ENCODE measurements at regions of chr20 and their contacts with region 1.

Region 1: GRCh38 chr20:62793912-62794724 is 2.2 kb upstream of the MRGBP start:
- DNase-seq: peak; percentile 93 to 97
- ATAC-seq: peak; percentile 65 to 83
- H3K4me3 ChIP-seq: peak overlapping the region; percentile 64
- H3K27ac ChIP-seq: peak overlapping the region; percentile 92 to 100
- H3K4me1 ChIP-seq: peaks cover 29% of the 10 kb centered on the region
- CTCF ChIP-seq: no peak
- EP300 ChIP-seq: no peak
- POLR2A ChIP-seq: peak; percentile 67
- RAD21 ChIP-seq: no peak

Region 2: DNA sequence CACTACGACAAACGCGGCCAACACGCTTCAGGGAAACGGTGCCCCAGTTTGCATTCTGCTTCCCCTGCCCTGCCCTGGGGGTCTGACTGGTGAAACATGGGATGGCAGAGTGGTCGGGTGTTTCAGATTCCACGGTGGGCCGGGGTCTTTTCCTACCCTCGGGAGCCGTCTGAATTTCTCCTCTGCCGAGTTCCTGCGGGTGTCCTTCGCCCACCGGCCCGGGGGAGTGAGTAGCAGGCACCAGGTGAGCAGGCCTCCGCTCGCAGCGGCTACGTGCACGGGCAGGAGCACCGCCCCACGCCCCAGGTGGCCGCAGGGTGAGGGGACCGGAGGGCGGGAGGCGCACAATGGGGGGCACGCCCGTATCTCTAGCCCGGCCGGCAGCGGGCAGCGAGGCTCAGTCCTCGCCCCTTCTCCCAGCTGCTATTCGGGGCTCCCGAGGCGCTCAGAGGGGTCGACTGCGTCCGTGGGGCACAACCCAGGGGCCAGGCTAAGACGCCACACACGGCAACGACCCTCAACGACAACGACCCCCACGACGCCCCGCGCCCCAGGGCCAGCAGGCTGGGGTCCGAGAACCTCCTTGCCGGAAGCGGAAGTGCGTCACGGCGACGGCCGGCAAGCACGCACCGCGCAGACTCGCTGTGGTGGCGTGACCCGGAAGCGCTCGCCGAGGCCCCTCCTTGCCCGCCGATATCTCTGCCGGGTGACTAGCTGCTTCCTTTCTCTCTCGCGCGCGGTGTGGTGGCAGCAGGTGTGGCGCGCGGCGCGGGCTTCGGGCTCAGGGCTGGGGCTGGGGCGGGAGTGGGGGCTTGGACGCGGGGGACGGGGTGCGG is 407.5 kb before region 1 on chr20 and contains the start of gene RPS21:
- CTCF ChIA-PET with region 1: no interaction called
- POLR2A ChIA-PET with region 1: no interaction called
- DNase-seq: peak in 1 of 2 experiments; percentile 93
- ATAC-seq: peak; percentile 78 to 87
- H3K4me3 ChIP-seq: peak within 1 kb of the TSS; percentile 94
- H3K27ac ChIP-seq: peak within 1 kb of the TSS; percentile 88 to 97
- H3K4me1 ChIP-seq: peaks cover 33% of the 10 kb centered on the region
- CTCF ChIP-seq: no peak
- EP300 ChIP-seq: no peak
- POLR2A ChIP-seq: peak; percentile 77
- RAD21 ChIP-seq: 0 out of 5 replicates have a peak, but pooled peaks of 1 of the 2 experiments have one; percentile 13
- polyA plus RNA-seq, gene RPS21: 3,697 and 4,026 TPM in 2 replicates

Region 3: GRCh38 chr20:62616728-62617621 is 177.1 kb before region 1 on chr20:
- CTCF ChIA-PET with region 1: interaction called, 15 read pairs
- POLR2A ChIA-PET with region 1: no interaction called
- DNase-seq: peak; percentile 71 to 85
- ATAC-seq: peak; percentile 92 to 99
- H3K4me3 ChIP-seq: no peak overlapping the region
- H3K27ac ChIP-seq: no peak overlapping the region
- H3K4me1 ChIP-seq: peaks cover 16% of the 10 kb centered on the region; the same call in 2 of the 3 replicates
- CTCF ChIP-seq: peak; percentile 87
- EP300 ChIP-seq: no peak
- POLR2A ChIP-seq: no peak
- RAD21 ChIP-seq: peak; percentile 93

Region 4: GRCh38 chr20:62668441-62669027 is 125.6 kb before region 1 on chr20:
- CTCF ChIA-PET with region 1: interaction called, 311 read pairs
- POLR2A ChIA-PET with region 1: interaction called, 3 read pairs
- DNase-seq: peak; percentile 72 to 91
- ATAC-seq: peak; percentile 79 to 91
- H3K4me3 ChIP-seq: no peak overlapping the region
- H3K27ac ChIP-seq: no peak overlapping the region
- H3K4me1 ChIP-seq: no peaks in the 10 kb centered on the region
- CTCF ChIP-seq: peak; percentile 88
- EP300 ChIP-seq: no peak
- POLR2A ChIP-seq: no peak
- RAD21 ChIP-seq: peak; percentile 93 to 97

Region 5: GRCh38 chr20:62704301-62704948 is 89.7 kb before region 1 on chr20:
- CTCF ChIA-PET with region 1: interaction called, 250 read pairs
- POLR2A ChIA-PET with region 1: interaction called, 16 read pairs
- DNase-seq: peak; percentile 65 to 66
- ATAC-seq: peak; percentile 45 to 61; a peak in 4 of 6 replicates
- H3K4me3 ChIP-seq: no peak overlapping the region
- H3K27ac ChIP-seq: peak overlapping the region; percentile 56 to 84; a peak in 4 of 6 replicates
- H3K4me1 ChIP-seq: peaks cover 42% of the 10 kb centered on the region
- CTCF ChIP-seq: no peak
- EP300 ChIP-seq: no peak
- POLR2A ChIP-seq: no peak
- RAD21 ChIP-seq: no peak

Region 6: GRCh38 chr20:62740286-62741141 is 53.6 kb before region 1 on chr20:
- CTCF ChIA-PET with region 1: interaction called, 27 read pairs
- POLR2A ChIA-PET with region 1: no interaction called
- DNase-seq: peak; percentile 70 to 83
- ATAC-seq: peak; percentile 80 to 90
- H3K4me3 ChIP-seq: no peak overlapping the region; the same call in 2 of the 3 replicates
- H3K27ac ChIP-seq: peak overlapping the region; percentile 78 to 86
- H3K4me1 ChIP-seq: peaks cover 21% of the 10 kb centered on the region
- CTCF ChIP-seq: no peak
- EP300 ChIP-seq: peak in 1 of 2 experiments; percentile 31; a peak in 1 of 5 replicates
- POLR2A ChIP-seq: no peak
- RAD21 ChIP-seq: no peak; a peak in 1 of 5 replicates

Region 7: GRCh38 chr20:62808211-62808865 is 14.2 kb after region 1 on chr20:
- CTCF ChIA-PET with region 1: interaction called, 29 read pairs
- POLR2A ChIA-PET with region 1: no interaction called
- DNase-seq: peak; percentile 65 to 83
- ATAC-seq: peak; percentile 58 to 82; a peak in 4 of 6 replicates
- H3K4me3 ChIP-seq: no peak overlapping the region
- H3K27ac ChIP-seq: no peak overlapping the region
- H3K4me1 ChIP-seq: peaks cover 17% of the 10 kb centered on the region
- CTCF ChIP-seq: peak; percentile 85
- EP300 ChIP-seq: no peak
- POLR2A ChIP-seq: no peak
- RAD21 ChIP-seq: peak; percentile 69 to 73

Region 8: DNA sequence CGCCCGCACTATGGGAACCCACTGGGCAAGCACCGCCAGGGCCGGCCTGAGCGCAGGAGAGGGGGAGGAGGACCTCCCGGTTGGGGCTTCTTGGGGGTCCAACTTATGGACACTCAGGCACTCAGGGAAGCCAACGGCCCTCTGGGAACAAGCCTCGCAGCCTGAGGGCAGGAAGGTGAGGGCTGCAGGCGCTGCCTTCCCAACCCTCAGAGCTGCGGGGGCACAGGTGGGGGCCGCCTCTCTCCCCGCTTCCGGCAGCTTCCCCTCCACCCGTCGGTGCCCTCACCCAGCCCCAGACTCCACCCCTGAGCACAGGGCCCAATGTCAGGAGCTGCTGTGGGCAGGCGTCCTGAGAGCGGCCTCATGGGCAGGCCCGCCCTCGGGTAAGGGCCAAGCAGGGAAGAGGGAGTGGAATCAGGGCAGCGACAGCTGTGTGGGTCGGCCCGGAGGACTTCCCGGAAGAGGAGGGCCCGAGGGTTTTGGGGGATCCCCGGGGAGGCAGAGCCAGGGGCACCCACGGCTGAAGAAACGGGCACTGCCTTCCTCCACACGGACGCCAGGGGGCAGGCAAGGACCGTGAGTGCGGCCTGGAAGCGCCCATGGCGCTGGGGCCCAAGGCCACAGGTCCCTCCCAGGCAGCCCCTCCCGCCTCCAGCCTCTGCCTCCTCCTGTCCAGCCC is 743.5 kb after region 1 on chr20:
- CTCF ChIA-PET with region 1: no interaction called
- POLR2A ChIA-PET with region 1: no interaction called
- DNase-seq: peak; percentile 98 to 100
- ATAC-seq: peak; percentile 86 to 95
- H3K4me3 ChIP-seq: peak overlapping the region; percentile 59
- H3K27ac ChIP-seq: peak overlapping the region; percentile 93 to 97
- H3K4me1 ChIP-seq: peaks cover 18% of the 10 kb centered on the region
- CTCF ChIP-seq: peak; percentile 94
- EP300 ChIP-seq: no peak
- POLR2A ChIP-seq: peak; percentile 50
- RAD21 ChIP-seq: peak; percentile 94 to 99